Right ventricle myocardium inferior (tissue), 1 donor: ENCODE measurements at regions of chr4 and their contacts with region 1.

Region 1: GRCh38 chr4:119785963-119786362 is 157.4 kb upstream of the PDE5A start:
- DNase-seq: no peak
- ATAC-seq: no peak

Region 2: DNA sequence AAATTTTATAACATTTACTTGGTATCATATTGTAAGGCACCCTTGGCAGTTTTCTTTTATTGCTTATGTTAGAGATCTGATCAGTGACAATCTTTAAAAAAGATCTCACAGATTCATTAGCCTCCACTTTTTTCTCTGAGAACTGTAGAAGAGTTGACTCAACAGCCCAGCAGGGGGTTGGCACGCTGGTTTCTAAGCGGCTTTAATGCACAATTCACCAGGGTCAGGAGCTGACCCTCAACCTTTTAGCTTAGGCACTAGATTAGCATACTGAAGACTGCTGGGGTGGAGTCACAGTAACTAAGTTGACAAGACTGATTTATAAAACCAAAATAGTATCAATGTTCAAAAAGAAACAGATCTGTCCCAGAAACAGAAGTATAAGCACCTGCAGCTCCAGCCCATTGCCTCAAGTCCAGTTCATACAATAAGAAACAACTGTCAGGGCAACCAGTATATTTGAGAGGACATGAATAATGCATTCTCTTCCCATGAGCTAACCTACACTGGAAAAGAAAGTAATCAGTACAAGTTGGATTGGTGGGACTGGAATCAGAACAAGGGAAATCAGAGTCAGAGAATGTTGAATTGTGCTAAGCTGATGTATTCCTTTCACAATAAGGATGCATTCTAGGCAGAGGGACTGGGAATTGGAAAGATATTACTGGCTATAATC is 235.0 kb before region 1 on chr4:
- intact Hi-C with region 1: no loop called
- DNase-seq: no peak
- ATAC-seq: no peak

Region 3: DNA sequence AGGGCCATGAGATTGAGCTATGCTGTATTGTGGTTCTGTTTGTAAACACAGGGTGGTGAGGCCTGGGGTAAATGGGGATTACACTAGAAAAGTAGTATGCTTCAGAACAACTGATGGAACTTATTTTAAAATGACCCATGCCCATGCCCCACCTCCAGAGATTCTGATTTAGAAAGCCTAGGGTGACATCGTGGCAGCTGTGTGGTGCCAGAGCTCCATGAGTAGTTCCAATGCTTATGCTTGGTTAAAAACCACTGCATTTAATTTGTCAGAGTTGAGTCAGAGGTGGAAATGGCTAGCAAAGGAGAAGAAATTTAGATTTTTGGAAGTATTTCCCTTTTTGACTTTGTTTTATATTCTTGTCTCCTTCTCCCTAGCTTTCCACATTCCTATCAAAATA is 94.0 kb before region 1 on chr4:
- intact Hi-C with region 1: loop called (anchors 5 kb)
- DNase-seq: no peak
- ATAC-seq: peak; percentile 62